ENCODE measurements at regions of chr18 and their contacts with region 1.

Region 1: DNA sequence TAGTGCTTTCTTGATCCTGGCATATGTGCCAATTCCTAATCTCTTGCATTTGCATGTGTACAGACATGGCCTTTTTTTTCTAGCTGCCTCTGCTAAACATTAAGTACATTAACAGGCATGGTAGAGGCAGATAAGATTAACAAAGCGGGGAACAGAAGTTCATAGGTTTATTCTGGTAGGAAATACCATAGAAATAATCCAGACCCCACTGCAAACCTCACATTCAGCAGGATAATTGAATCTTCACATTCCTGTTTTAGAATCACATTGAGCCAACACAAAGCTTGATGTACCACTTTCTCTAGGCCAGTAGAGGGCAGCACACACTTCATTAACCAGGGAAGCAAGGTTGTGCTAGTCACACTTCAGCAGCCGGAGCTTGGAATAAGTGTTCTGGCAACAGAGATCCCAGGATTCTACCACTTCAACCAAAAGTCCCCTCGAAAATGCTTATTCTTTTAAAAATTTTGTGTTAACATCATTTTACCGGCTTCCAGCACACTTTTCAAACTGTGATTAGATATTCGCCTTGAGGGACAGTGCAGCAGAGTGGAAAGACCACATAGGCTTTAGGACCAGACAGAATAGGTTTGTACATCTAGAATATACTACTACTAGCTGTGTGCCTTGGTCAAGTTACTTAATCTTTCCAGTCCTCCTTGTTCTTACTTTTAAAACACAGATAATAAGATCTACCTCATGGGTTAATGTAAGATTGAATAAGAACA is 420.2 kb upstream of the CHST9 start:
- DNase-seq: peak; percentile 25
- H3K4me3 ChIP-seq: no peak overlapping the region
- H3K27ac ChIP-seq: no peak overlapping the region
- H3K4me1 ChIP-seq: no peaks in the 10 kb centered on the region
- H3K27me3 ChIP-seq: no peaks in the 10 kb centered on the region
- CTCF ChIP-seq: peak; percentile 50 to 76 (median 69)
- EP300 ChIP-seq: no peak
- POLR2A ChIP-seq: no peak

Region 2: GRCh38 chr18:27005589-27005988 is 599.7 kb before region 1 on chr18:
- in situ Hi-C with region 1: loop called in 1 of 4 experiments (anchors 10 kb)
- intact Hi-C with region 1: no loop called
- DNase-seq: no peak
- H3K4me3 ChIP-seq: no peak overlapping the region
- H3K27ac ChIP-seq: no peak overlapping the region
- H3K4me1 ChIP-seq: no peaks in the 10 kb centered on the region
- H3K27me3 ChIP-seq: no peaks in the 10 kb centered on the region
- CTCF ChIP-seq: peak in 1 of 5 experiments; percentile 9
- EP300 ChIP-seq: no peak
- POLR2A ChIP-seq: no peak

Region 3: DNA sequence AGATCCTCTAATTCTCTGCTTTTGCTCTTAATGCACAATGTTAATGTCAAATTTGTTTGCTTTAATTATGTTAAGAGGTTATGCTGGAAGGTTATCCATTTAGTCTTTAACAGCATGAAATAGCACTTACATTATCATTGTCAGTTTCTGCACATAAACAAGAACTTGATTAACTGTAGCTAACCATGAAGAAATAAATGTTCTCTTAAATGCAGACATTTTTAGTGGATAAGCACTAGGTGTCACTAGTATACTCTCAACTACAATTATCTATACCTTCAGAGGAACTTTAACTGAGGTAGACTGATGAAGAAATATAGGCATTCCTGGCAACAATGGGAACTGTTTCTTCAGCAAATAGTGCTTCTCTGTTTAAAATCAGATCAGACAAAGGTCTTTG is 241.4 kb before region 1 on chr18:
- in situ Hi-C with region 1: loop called in 2 of 4 experiments (anchors 10 kb)
- intact Hi-C with region 1: no loop called
- DNase-seq: no peak
- H3K4me3 ChIP-seq: no peak overlapping the region
- H3K27ac ChIP-seq: no peak overlapping the region
- H3K4me1 ChIP-seq: no peaks in the 10 kb centered on the region
- H3K27me3 ChIP-seq: no peaks in the 10 kb centered on the region
- CTCF ChIP-seq: peak in 2 of 5 experiments; percentile 5 to 8
- EP300 ChIP-seq: no peak
- POLR2A ChIP-seq: no peak

Region 4: DNA sequence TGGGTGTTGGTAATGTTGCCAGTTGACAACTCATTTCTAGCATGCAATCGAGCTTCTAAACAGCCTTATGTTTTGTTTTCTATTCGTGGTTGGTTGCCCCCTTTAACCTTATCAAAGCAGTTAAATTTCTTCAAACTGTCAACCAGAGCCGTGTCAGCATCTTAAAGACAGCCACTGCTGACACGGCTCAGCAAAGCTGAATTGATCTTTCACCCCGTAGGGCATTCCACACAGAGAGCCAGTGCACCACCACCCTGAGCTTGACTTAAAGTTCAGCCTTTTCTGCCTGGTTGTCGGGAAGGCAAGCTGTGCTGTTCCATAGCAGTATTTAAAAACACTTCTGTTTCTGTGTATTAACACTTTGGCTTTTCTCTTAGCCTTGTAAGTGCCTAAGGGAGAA is 65.2 kb before region 1 on chr18:
- in situ Hi-C with region 1: loop called in 1 of 4 experiments (anchors 10 kb)
- intact Hi-C with region 1: no loop called
- DNase-seq: no peak
- H3K4me3 ChIP-seq: no peak overlapping the region
- H3K27ac ChIP-seq: no peak overlapping the region
- H3K4me1 ChIP-seq: no peaks in the 10 kb centered on the region
- H3K27me3 ChIP-seq: no peaks in the 10 kb centered on the region
- CTCF ChIP-seq: no peak
- EP300 ChIP-seq: no peak
- POLR2A ChIP-seq: no peak

Measured in transverse colon (tissue), 4 donors.